GM13976 (cell line): ENCODE measurements at regions of chr6 and their contacts with region 1.

Region 1: DNA sequence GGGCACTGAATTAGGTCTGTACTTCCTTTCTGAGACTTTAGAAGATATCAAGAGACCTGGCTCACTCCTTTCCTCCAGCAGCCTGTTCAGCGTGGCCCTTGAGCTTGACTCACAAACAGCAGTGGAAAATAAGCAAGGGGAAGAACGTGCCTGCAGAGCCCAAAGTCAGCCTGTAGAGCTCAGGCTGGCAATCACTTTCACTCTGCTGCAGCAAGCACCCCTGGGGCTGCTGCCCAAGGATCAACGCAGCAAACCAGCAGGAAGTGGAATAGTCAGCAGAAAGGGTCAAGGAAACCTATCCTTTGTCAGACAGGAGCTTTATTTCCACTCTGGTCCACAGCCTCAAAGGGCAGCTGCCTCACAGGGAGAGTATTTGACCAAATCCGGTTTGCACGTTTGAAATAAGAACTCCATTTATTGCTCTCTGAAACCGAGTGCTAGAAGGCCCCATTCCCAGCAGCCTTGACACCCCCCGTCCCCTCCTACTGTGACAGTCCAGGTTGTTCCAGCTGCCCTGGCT is 77.4 kb downstream of the PRDM1 start:
- DNase-seq: no peak
- CTCF ChIP-seq: no peak

Region 2: DNA sequence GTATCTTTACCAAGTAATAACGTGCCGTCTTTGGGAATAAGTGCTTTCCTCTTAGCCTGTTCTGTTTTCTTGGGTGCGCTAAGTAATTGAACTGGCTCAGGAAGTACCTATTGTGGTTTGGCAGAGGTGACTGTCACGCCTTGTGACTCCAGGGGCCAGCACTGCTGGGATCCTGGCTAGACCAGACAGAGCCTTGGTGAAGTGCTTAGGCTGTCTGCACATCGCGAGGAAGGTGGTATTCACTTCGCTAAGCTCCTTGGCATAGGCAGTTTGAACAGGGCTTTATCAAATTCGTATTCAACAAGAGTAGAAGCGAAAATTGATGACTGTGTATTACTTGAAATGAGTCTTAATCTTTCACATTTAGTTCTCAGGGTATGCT is 59.8 kb before region 1 on chr6:
- in situ Hi-C with region 1: loop called (anchors 10 kb)
- DNase-seq: peak; percentile 39
- CTCF ChIP-seq: no peak

Region 3: GRCh38 chr6:106539936-106540335 is 376.4 kb after region 1 on chr6:
- in situ Hi-C with region 1: no loop called
- DNase-seq: no peak
- CTCF ChIP-seq: no peak